ENCODE measurements at regions of chr19 and their contacts with region 1.

Region 1: DNA sequence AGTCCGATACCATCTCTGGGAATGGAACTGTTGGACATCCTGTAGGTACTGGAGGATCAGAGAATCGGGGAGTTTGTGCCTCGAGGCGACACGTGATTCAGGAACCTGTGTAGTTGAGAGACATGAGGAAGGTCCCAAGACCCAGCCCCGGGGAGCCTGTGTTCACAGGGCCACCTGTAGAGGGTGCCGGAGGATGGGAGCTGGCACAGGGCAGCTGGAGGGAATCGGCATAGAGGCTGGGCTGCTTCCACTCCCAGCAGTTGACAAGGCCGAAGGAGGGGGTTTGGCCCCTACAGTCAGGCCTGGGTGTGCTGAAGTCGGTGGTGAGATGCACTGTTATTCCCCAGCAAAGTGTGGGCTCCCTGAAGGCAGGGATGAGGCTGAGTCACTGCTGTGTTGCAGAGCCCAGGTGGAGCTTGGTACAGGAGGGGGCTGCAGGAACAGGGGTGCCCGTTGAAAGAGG is 2.5 kb upstream of the ISYNA1 start:
- DNase-seq: peak in 5 of 7 donors; percentile 39 to 73 (median 51)
- H3K4me3 ChIP-seq: no peak overlapping the region
- H3K27ac ChIP-seq: peak overlapping the region in 1 of 5 donors; percentile 38
- H3K4me1 ChIP-seq: peaks cover 25 to 29% of the 10 kb centered on the region in 2 donors
- H3K27me3 ChIP-seq: no peaks in the 10 kb centered on the region
- CTCF ChIP-seq: peak in 3 of 6 experiments; percentile 18 to 37 (median 24)
- POLR2A ChIP-seq: no peak

Region 2: DNA sequence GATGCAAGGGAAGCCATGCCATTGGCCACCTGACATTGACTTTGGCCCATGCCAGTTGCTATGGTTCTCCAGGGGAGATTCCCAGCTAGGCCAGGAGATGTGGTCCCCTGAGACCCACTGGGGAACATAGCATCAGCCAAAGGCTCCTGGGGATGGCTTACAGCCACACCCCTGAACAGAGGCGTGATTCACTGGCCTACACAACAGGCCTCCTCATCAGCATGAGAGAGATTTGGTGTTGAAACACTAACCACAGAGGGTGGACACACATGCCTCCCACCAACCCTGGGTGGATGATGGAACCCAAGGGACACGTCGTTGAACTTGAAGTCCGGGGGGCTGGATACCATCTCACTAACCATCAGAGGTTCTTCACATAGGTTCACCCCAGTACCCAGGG is 180.6 kb before region 1 on chr19:
- intact Hi-C with region 1: no loop called
- DNase-seq: no peak
- H3K4me3 ChIP-seq: no peak overlapping the region
- H3K27ac ChIP-seq: no peak overlapping the region
- H3K4me1 ChIP-seq: peaks cover 6 to 14% of the 10 kb centered on the region in 2 donors
- H3K27me3 ChIP-seq: no peaks in the 10 kb centered on the region
- CTCF ChIP-seq: no peak
- POLR2A ChIP-seq: no peak

Region 3: DNA sequence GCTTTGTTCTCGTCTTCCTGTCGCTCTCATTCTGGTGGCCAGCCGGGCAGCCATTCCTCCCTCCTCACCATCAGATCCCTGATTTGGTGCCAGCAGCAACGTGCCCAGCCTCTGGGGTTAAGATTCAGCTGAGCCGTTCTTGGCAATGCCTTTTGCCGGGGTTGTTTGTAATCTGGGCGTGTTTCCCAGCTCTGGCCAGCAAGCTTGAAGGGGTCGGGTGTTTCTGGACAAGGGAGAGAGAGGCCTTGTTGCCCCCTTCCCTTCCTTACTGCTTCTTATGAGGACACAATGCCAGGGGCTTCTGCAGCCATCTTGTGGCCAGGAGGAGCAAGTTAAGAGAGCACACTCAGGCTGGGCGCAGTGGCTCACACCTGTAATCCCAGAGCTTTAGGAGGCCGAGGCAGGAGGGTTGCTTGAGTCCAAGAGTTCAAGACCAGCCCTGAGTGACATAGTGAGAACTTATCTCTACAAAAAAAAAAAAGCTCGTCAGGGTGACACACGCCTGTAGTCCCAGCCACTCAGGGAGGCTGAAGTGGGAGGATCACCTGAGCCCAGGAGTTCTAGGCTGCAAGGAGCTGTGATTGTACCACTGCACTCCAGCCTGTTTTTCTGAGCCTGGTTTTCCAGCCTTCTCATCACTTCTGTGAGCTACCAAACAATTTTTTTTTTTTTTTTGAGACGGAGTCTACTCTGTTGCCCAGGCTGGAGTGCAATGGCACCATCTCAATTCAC is 232.3 kb after region 1 on chr19:
- intact Hi-C with region 1: loop called in 1 of 2 experiments (anchors 10 kb)
- DNase-seq: no peak
- H3K4me3 ChIP-seq: no peak overlapping the region
- H3K27ac ChIP-seq: peak overlapping the region in 1 of 5 donors; percentile 66
- H3K4me1 ChIP-seq: peaks cover 5 to 7% of the 10 kb centered on the region in 2 donors
- H3K27me3 ChIP-seq: no peaks in the 10 kb centered on the region
- CTCF ChIP-seq: no peak
- POLR2A ChIP-seq: no peak